ENCODE measurements at regions of chr3 and their contacts with region 1.

Region 1: DNA sequence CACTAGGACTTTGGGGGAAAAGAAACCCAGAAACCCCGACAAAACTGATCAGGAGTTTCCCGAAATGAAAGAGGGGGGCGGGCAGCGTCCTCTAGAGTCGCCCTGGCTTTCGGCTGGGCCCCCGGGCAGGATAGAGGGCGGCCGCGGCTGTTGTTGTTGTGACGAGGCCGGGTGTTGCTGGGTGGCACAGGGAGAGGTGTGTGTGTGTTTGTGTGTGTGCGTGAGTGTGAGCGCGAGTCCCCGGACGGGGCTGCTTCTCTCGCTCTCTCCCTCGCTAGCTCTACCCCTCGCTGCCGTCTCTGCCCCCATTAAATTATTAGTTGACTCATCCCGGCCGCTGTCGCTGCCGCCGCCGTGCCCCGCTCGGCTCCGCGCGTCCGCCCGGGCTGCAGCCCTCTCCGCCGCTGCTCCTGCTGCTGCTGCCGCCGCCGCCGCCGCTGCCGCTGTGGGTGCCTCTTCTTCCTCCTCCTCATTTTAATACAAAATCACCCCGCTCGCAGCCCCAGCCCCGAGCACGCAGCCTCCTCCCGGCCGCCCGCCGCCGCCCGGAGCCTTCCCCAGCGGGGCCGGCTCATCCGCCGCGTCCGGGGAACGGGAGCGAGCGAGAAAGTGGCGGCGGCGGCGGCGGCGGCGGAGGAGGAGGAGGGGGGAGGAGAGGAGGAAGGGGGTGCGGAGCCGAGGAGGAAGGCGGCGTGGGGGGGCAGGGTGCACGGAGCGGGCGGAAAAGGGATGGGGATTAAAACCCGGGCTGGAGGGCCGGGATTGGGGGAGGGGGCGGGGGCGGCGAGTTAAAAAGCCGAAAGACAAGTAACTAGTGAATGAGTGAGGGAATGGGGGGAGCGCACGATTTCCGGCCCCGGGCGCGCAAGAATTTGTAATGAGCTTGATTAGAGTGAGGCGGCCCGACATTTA is at the start of gene SATB1:
- DNase-seq: peak; percentile 67 to 81 (median 68)
- H3K4me3 ChIP-seq: peak within 1 kb of the TSS; percentile 66 to 77
- H3K4me3 Mint-ChIP-seq: peak within 1 kb of the TSS; percentile 91 to 98 (median 97)
- H3K27ac ChIP-seq: peak within 1 kb of the TSS; percentile 79
- H3K27ac Mint-ChIP-seq: peak within 1 kb of the TSS; percentile 95 to 98 (median 97)
- H3K4me1 ChIP-seq: peaks cover 72% of the 10 kb centered on the region
- H3K4me1 Mint-ChIP-seq: peaks cover 48 to 88% (median 65%) of the 10 kb centered on the region in 4 donors
- H3K27me3 ChIP-seq: no peaks in the 10 kb centered on the region
- H3K27me3 Mint-ChIP-seq: peaks cover 0 to 1% of the 10 kb centered on the region in 2 donors
- total RNA-seq, gene SATB1: 211 TPM

Region 2: DNA sequence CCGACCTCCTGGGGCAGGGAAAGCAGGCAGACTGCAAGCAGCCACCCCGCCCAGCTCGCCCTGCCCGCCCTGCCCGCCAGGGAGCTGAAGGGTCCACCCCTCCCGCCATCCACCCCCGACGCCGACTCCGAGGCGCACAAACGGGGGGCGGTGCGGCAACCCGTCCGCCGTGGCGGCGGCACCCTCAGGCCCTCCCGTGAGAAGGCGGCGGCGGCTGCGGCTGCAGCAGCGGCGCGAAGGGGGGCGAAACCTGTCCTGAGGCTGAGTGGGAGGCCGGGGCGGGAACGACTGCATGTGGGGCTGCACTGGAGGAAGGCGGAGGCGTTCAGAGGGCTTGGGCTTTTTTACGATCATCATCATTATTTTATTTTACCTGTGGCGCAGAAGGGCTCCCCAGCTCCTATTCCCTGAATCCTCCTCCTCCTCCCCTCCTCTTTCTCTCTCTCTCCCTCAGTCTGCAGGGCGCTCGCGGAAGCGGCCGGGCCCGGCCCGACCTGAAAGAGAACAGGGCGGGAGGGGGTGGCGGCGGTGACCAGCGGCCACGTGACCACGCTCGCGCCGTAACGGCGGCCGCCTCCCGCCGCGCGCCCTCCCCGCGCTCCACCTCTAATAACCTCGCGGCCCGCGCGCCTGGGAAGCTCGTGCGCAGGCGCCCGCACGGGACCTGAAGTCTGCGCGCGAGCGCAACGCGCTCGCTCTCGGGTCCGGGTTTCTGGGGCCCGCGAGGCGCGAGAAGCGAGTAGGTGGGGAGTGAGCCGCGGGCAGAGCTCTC is 682.7 kb before region 1 on chr3 and contains the start of gene TBC1D5:
- CTCF ChIA-PET with region 1: no interaction called
- POLR2A ChIA-PET with region 1: no interaction called
- intact Hi-C with region 1: loop called (anchors 10 kb)
- DNase-seq: peak; percentile 88 to 92 (median 91)
- H3K4me3 ChIP-seq: peak within 1 kb of the TSS; percentile 38 to 81
- H3K4me3 Mint-ChIP-seq: peak within 1 kb of the TSS; percentile 88 to 94 (median 92)
- H3K27ac ChIP-seq: peak within 1 kb of the TSS; percentile 54
- H3K27ac Mint-ChIP-seq: peak within 1 kb of the TSS; percentile 90 to 95 (median 92)
- H3K4me1 ChIP-seq: peaks cover 39% of the 10 kb centered on the region
- H3K4me1 Mint-ChIP-seq: peaks cover 29 to 53% (median 39%) of the 10 kb centered on the region in 4 donors
- H3K27me3 ChIP-seq: no peaks in the 10 kb centered on the region
- H3K27me3 Mint-ChIP-seq: no peaks in the 10 kb centered on the region
- total RNA-seq, gene TBC1D5: 46.6 to 52.2 TPM

Region 3: GRCh38 chr3:18411541-18411940 is 13.4 kb before region 1 on chr3:
- CTCF ChIA-PET with region 1: interaction called, 4 read pairs
- POLR2A ChIA-PET with region 1: interaction called, 11 read pairs
- intact Hi-C with region 1: loop called (anchors 1 kb)
- DNase-seq: peak in 4 of 5 donors; percentile 32 to 51 (median 42)
- H3K4me3 ChIP-seq: no peak overlapping the region
- H3K4me3 Mint-ChIP-seq: peak overlapping the region in 7 of 8 donors; percentile 29 to 67 (median 61)
- H3K27ac ChIP-seq: no peak overlapping the region
- H3K27ac Mint-ChIP-seq: peak overlapping the region; percentile 10 to 79 (median 43)
- H3K4me1 ChIP-seq: peaks cover 50% of the 10 kb centered on the region
- H3K4me1 Mint-ChIP-seq: peaks cover 42 to 81% (median 67%) of the 10 kb centered on the region in 4 donors
- H3K27me3 ChIP-seq: no peaks in the 10 kb centered on the region
- H3K27me3 Mint-ChIP-seq: no peaks in the 10 kb centered on the region

Region 4: GRCh38 chr3:18740631-18741583 is 315.9 kb after region 1 on chr3:
- CTCF ChIA-PET with region 1: no interaction called
- POLR2A ChIA-PET with region 1: no interaction called
- intact Hi-C with region 1: loop called (anchors 5 kb)
- DNase-seq: peak; percentile 78 to 87 (median 82)
- H3K4me3 ChIP-seq: peak overlapping the region in 1 of 2 donors; percentile 35
- H3K4me3 Mint-ChIP-seq: peak overlapping the region; percentile 69 to 87 (median 81)
- H3K27ac ChIP-seq: peak overlapping the region; percentile 60
- H3K27ac Mint-ChIP-seq: peak overlapping the region; percentile 88 to 97 (median 95)
- H3K4me1 ChIP-seq: peaks cover 79% of the 10 kb centered on the region
- H3K4me1 Mint-ChIP-seq: peaks cover 67 to 77% (median 72%) of the 10 kb centered on the region in 4 donors
- H3K27me3 ChIP-seq: no peaks in the 10 kb centered on the region
- H3K27me3 Mint-ChIP-seq: no peaks in the 10 kb centered on the region

Region 5: DNA sequence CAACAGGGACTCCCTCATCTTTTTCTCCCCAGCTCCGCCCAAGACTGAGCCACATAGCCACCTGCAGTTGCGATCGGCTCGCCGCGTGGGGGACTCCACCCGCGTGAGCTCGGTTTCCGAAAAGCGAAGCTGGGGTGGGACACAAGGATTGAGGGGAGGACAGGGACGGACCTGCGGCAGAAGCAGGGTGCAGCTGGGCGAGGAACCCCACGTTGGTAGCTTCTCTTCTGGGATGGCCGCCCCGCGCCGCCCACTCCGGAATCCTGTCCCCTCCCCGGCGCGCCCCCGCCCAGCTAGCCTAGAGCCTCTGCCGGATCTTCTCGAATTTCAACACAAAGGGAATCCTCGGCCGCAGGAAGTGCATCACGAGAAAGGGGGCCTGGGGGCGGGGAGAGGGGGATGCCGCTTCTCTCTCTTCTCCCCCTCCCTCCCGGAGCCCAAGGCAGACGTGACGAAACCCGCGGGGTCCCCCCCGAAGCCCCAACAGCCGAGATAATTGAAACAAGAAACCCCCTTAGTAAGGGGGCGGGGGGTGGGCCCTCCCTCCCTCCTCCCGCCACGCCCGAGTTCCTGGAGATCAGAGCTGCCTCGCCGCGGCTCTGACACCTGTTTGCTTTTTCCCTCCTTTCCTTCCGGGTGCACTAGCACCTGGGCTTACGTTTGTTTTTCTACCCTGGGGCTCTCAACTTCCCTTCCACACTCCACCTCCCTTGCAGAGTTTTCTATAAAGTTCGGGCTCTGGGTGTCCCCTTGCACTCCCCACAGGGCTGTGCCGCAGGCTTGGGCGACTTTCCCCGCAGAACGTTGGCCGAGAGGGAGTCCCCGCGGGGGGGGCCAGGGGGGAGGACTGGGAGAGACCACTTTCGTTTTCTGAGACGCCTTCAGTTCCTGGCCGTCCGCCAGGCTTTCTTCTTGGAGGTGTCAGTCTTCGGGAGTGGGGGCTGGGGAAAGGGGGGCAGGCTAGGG is 722.0 kb after region 1 on chr3:
- CTCF ChIA-PET with region 1: no interaction called
- POLR2A ChIA-PET with region 1: no interaction called
- intact Hi-C with region 1: loop called (anchors 10 kb)
- DNase-seq: peak; percentile 43 to 83 (median 55)
- H3K4me3 ChIP-seq: peak overlapping the region; percentile 32 to 72
- H3K4me3 Mint-ChIP-seq: peak overlapping the region; percentile 87 to 94 (median 92)
- H3K27ac ChIP-seq: no peak overlapping the region
- H3K27ac Mint-ChIP-seq: peak overlapping the region; percentile 34 to 87 (median 65)
- H3K4me1 ChIP-seq: peaks cover 22% of the 10 kb centered on the region
- H3K4me1 Mint-ChIP-seq: peaks cover 12 to 28% (median 17%) of the 10 kb centered on the region in 4 donors
- H3K27me3 ChIP-seq: peaks cover 7% of the 10 kb centered on the region
- H3K27me3 Mint-ChIP-seq: peaks cover 18 to 19% of the 10 kb centered on the region in 2 donors

Measured in CD4-positive, alpha-beta memory T cell (primary cell).